ENCODE measurements at regions of chr18 and their contacts with region 1.

Region 1: GRCh38 chr18:50091509-50092244 is 103.3 kb downstream of the MYO5B start:
- DNase-seq: no peak
- ATAC-seq: no peak
- H3K4me3 ChIP-seq: no peak overlapping the region; a peak in 2 of 6 replicates
- H3K27ac ChIP-seq: peak overlapping the region; percentile 69
- H3K4me1 ChIP-seq: peaks cover 56% of the 10 kb centered on the region
- H3K27me3 ChIP-seq: no peaks in the 10 kb centered on the region
- CTCF ChIP-seq: no peak
- EP300 ChIP-seq: no peak
- POLR2A ChIP-seq: no peak
- RAD21 ChIP-seq: no peak

Region 2: GRCh38 chr18:49997558-49997957 is 94.1 kb before region 1 on chr18:
- CTCF ChIA-PET with region 1: no interaction called
- POLR2A ChIA-PET with region 1: no interaction called
- in situ Hi-C with region 1: no loop called
- intact Hi-C with region 1: no loop called
- DNase-seq: no peak
- ATAC-seq: no peak
- H3K4me3 ChIP-seq: no peak overlapping the region
- H3K27ac ChIP-seq: no peak overlapping the region
- H3K4me1 ChIP-seq: 0 out of 2 replicates have a peak, but pooled peaks cover 4% of the 10 kb centered on the region
- H3K27me3 ChIP-seq: no peaks in the 10 kb centered on the region
- CTCF ChIP-seq: no peak
- EP300 ChIP-seq: no peak
- POLR2A ChIP-seq: no peak
- RAD21 ChIP-seq: no peak

Region 3: DNA sequence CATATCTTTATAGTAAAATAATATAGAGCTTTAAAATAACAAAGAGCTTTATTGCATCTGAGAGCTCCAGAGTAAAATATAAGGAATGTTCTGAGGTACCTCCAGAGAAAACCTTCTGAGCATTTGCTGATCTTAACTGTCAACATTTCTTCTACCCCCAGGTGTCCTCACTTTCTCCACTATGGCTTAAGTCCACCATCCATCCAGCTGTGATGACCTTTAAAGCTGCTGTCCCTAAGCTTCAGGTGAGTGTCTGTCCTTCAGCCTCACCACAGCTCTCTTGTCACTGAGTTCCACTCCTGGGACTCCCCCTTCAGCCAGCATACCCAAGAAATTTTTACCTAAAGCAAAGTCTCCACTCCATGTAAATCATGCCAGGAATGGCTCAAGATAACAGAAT is 34.7 kb before region 1 on chr18:
- CTCF ChIA-PET with region 1: no interaction called
- POLR2A ChIA-PET with region 1: interaction called, 3 read pairs
- in situ Hi-C with region 1: no loop called
- intact Hi-C with region 1: loop called (anchors 2 kb)
- DNase-seq: peak; percentile 14
- ATAC-seq: peak; percentile 72
- H3K4me3 ChIP-seq: no peak overlapping the region
- H3K27ac ChIP-seq: no peak overlapping the region
- H3K4me1 ChIP-seq: peaks cover 19% of the 10 kb centered on the region
- H3K27me3 ChIP-seq: no peaks in the 10 kb centered on the region
- CTCF ChIP-seq: peak; percentile 50
- EP300 ChIP-seq: no peak
- POLR2A ChIP-seq: no peak
- RAD21 ChIP-seq: no peak

Region 4: DNA sequence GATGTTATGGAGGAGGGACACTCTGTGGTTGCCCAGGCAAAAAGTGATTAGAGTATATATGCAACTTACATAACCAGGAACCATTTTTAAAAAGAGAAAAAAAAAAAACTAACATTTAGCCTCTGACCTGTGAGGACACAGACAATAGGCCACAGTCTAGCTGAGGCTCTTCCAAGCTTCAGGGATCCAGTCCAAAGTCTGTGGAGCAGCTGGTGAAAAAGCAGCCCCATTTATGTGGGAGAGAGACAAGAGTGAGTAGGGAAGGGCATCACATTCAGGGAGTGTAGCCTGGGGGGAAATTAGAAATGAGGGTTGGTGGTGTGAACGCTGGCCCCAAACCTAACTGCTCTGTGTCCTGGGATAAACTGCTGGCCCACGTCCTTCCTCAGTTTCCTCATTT is 19.5 kb before region 1 on chr18:
- CTCF ChIA-PET with region 1: no interaction called
- POLR2A ChIA-PET with region 1: interaction called, 7 read pairs
- in situ Hi-C with region 1: no loop called
- intact Hi-C with region 1: loop called (anchors 1 kb)
- DNase-seq: peak; percentile 84
- ATAC-seq: peak; percentile 91
- H3K4me3 ChIP-seq: no peak overlapping the region; a peak in 1 of 6 replicates
- H3K27ac ChIP-seq: peak overlapping the region; percentile 56
- H3K4me1 ChIP-seq: peaks cover 68% of the 10 kb centered on the region
- H3K27me3 ChIP-seq: no peaks in the 10 kb centered on the region
- CTCF ChIP-seq: no peak
- EP300 ChIP-seq: peak in 1 of 2 experiments; percentile 34; a peak in 1 of 4 replicates
- POLR2A ChIP-seq: no peak
- RAD21 ChIP-seq: no peak

Region 5: DNA sequence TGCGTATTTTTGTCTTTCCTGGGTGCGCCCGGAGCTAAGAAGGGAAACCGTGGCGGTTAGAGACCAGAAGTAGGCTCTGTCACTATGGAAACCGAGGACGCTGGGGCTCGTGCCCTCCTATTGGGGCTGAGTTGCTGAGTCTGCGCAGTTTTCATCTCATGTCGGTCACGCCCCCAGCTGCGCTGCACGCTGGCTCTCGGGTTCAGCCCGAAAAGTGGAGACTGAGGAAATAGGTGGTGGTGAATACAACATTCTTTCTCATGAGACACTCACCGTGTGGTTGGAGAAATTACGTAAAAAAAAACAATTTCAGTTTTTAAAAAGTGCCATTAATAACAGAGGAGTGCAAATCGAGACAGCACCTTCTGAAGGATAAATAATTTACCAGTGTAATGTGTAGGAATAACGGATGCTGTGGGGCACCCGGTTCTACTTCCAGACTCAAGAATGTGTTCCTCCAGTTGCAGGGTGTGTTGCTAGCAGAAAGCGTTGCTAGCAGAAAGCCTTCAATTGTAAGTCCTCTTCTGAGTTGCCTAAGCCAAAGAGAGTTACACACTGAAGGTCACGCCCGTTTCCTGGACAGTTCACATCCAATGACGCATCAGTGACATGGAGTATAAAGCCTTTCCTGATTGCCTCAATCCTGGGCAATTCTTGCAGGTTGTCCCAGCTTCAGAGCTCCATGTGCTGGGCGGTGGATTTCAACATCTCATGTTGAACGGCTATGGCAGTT is 216.2 kb after region 1 on chr18:
- CTCF ChIA-PET with region 1: no interaction called
- POLR2A ChIA-PET with region 1: no interaction called
- in situ Hi-C with region 1: no loop called
- intact Hi-C with region 1: no loop called
- DNase-seq: peak; percentile 85
- ATAC-seq: peak; percentile 98
- H3K4me3 ChIP-seq: peak overlapping the region; percentile 46 to 75 (median 71)
- H3K27ac ChIP-seq: no peak overlapping the region
- H3K4me1 ChIP-seq: peaks cover 37% of the 10 kb centered on the region
- H3K27me3 ChIP-seq: no peaks in the 10 kb centered on the region
- CTCF ChIP-seq: no peak
- EP300 ChIP-seq: no peak
- POLR2A ChIP-seq: no peak
- RAD21 ChIP-seq: no peak